ENCODE measurements at regions of chr5 and their contacts with region 1.

Region 1: GRCh38 chr5:162888268-162888667 is 549.1 kb upstream of the CCNG1 start:
- DNase-seq: no peak
- ATAC-seq: no peak
- H3K4me3 ChIP-seq: no peak overlapping the region
- H3K4me3 Mint-ChIP-seq: no peak overlapping the region
- H3K27ac ChIP-seq: no peak overlapping the region
- H3K27ac Mint-ChIP-seq: no peak overlapping the region
- H3K4me1 ChIP-seq: no peaks in the 10 kb centered on the region
- H3K4me1 Mint-ChIP-seq: no peaks in the 10 kb centered on the region
- H3K27me3 ChIP-seq: no peaks in the 10 kb centered on the region
- H3K27me3 Mint-ChIP-seq: no peaks in the 10 kb centered on the region

Region 2: DNA sequence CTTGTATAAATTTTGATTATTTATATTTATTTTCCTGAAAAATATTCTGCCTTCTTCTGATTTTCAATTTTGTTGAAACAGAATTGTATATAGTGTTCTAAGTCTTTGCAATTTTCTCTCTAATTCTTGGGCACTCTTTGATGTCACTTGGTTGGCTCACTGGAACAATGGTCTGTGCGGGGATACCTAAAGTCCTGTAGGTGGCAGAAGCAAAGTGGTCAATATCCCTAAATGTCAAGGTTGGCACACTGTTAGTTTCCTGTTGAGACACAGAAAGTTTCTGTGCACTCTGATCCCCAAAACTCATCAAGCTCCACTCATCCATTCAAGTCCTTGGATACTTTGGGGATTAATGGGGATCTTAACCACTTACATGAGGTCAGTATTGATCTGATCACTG is 68.3 kb after region 1 on chr5:
- CTCF ChIA-PET with region 1: interaction called in 1 of 2 experiments, 13 read pairs
- POLR2A ChIA-PET with region 1: no interaction called
- DNase-seq: no peak
- ATAC-seq: no peak
- H3K4me3 ChIP-seq: no peak overlapping the region
- H3K4me3 Mint-ChIP-seq: no peak overlapping the region
- H3K27ac ChIP-seq: no peak overlapping the region
- H3K27ac Mint-ChIP-seq: no peak overlapping the region
- H3K4me1 ChIP-seq: no peaks in the 10 kb centered on the region
- H3K4me1 Mint-ChIP-seq: no peaks in the 10 kb centered on the region
- H3K27me3 ChIP-seq: no peaks in the 10 kb centered on the region
- H3K27me3 Mint-ChIP-seq: no peaks in the 10 kb centered on the region

Measured in T-cell (primary cell).